CD4-positive, alpha-beta memory T cell (primary cell): ENCODE measurements at regions of chr2 and their contacts with region 1.

Region 1: GRCh38 chr2:74391580-74392448 is 11.7 kb upstream of the DCTN1 start:
- DNase-seq: peak; percentile 92 to 96 (median 94)
- H3K4me3 ChIP-seq: peak overlapping the region; percentile 84 to 90
- H3K4me3 Mint-ChIP-seq: peak overlapping the region in 5 of 8 donors; percentile 96 to 99 (median 97)
- H3K27ac ChIP-seq: peak overlapping the region; percentile 88
- H3K27ac Mint-ChIP-seq: peak overlapping the region in 6 of 7 donors; percentile 99 to 100 (median 100)
- H3K4me1 ChIP-seq: peaks cover 27% of the 10 kb centered on the region
- H3K4me1 Mint-ChIP-seq: peaks cover 5 to 13% (median 6%) of the 10 kb centered on the region in 4 donors
- H3K27me3 ChIP-seq: no peaks in the 10 kb centered on the region
- H3K27me3 Mint-ChIP-seq: peaks cover 0 to 5% of the 10 kb centered on the region in 2 donors

Region 2: DNA sequence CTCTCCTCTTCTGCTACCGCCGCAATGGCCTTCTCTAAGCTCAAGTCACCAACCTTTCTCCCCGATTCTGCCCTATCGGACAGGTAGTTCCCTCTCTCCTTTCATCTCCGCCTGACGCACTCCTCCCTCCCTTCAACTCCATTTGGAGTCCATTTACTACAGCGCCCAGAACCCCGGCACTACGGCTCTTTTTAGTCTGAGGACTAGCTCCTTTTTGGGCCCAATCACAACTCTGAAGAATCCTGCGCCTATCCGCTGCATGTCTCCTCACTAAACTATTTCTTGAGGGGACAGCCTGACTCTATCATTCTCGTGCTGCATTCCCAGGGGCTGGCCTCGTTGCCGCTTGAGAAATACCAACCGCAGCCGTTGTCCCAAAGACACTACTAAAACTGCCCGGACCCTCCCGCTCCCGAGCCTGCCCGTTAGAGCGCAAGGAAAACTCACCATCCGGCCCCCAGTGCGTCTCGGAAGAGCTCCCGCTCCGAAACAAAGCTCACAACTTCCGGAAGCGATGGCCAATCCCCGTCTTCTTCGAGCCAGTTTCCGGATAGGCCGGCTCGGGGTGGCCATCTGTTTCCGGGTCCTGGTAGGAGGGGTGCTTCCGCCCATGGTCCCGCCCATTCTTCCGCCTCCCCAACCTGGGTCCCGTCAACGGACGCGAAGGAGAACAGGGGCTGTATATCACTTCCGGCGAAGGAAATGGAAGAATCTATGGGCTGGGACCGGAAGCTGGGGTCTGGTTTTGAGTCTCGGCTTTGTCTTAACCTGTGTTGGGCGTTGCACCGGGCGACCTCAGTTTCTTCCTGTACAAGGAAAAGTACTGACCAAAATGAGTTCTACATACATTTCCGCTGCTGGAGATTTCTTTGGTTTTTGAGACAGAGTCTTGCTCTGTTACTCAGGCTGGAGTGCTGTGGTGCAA is 654.7 kb before region 1 on chr2 and contains the start of gene TPRKB:
- CTCF ChIA-PET with region 1: no interaction called
- POLR2A ChIA-PET with region 1: interaction called, 10 read pairs
- intact Hi-C with region 1: loop called (anchors 5 kb)
- DNase-seq: peak; percentile 93 to 95 (median 94)
- H3K4me3 ChIP-seq: peak within 1 kb of the TSS; percentile 43 to 74
- H3K4me3 Mint-ChIP-seq: peak within 1 kb of the TSS; percentile 90 to 98 (median 95)
- H3K27ac ChIP-seq: peak within 1 kb of the TSS; percentile 68
- H3K27ac Mint-ChIP-seq: peak within 1 kb of the TSS; percentile 85 to 96 (median 93)
- H3K4me1 ChIP-seq: peaks cover 24% of the 10 kb centered on the region
- H3K4me1 Mint-ChIP-seq: peaks cover 15 to 25% (median 19%) of the 10 kb centered on the region in 4 donors
- H3K27me3 ChIP-seq: no peaks in the 10 kb centered on the region
- H3K27me3 Mint-ChIP-seq: no peaks in the 10 kb centered on the region
- total RNA-seq, gene TPRKB: 31.7 to 33.0 TPM

Region 3: GRCh38 chr2:74178201-74179062 is 213.4 kb before region 1 on chr2 and contains the start of gene MOB1A:
- CTCF ChIA-PET with region 1: no interaction called
- POLR2A ChIA-PET with region 1: interaction called, 12 read pairs
- intact Hi-C with region 1: no loop called
- DNase-seq: peak; percentile 97 to 99 (median 98)
- H3K4me3 ChIP-seq: peak within 1 kb of the TSS; percentile 69 to 74
- H3K4me3 Mint-ChIP-seq: peak within 1 kb of the TSS; percentile 90 to 94 (median 94)
- H3K27ac ChIP-seq: peak within 1 kb of the TSS; percentile 99
- H3K27ac Mint-ChIP-seq: peak within 1 kb of the TSS; percentile 89 to 96 (median 95)
- H3K4me1 ChIP-seq: peaks cover 47% of the 10 kb centered on the region
- H3K4me1 Mint-ChIP-seq: peaks cover 22 to 48% (median 35%) of the 10 kb centered on the region in 4 donors
- H3K27me3 ChIP-seq: no peaks in the 10 kb centered on the region
- H3K27me3 Mint-ChIP-seq: no peaks in the 10 kb centered on the region
- total RNA-seq, gene MOB1A: 135 TPM

Region 4: DNA sequence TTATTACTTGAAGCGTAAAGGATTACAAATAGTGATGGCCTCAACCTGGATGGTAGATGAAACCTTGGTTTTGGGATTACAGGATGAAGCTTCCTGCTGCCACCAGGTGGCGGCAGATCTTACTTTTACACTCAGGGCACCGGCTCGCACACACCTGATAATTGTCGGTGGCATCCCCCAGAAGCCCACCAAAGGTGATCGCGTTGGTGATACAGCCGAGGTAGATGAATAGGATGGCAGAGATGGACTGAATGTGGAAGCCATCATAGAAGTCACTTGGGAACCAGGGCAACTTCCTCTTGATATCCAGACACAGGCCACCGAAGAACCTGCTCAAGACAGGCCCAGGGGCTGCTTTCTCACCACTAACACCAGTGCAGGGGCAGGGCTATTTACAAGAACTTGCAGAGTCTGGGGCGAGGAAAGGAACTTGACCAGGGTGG is 141.6 kb before region 1 on chr2:
- CTCF ChIA-PET with region 1: interaction called, 9 read pairs
- POLR2A ChIA-PET with region 1: no interaction called
- intact Hi-C with region 1: loop called (anchors 1 kb)
- DNase-seq: peak in 4 of 5 donors; percentile 53 to 59 (median 57)
- H3K4me3 ChIP-seq: no peak overlapping the region
- H3K4me3 Mint-ChIP-seq: peak overlapping the region in 1 of 8 donors; percentile 55
- H3K27ac ChIP-seq: no peak overlapping the region
- H3K27ac Mint-ChIP-seq: peak overlapping the region in 3 of 7 donors; percentile 55 to 84 (median 84)
- H3K4me1 ChIP-seq: peaks cover 4% of the 10 kb centered on the region
- H3K4me1 Mint-ChIP-seq: peaks cover 4 to 8% (median 6%) of the 10 kb centered on the region in 4 donors
- H3K27me3 ChIP-seq: no peaks in the 10 kb centered on the region
- H3K27me3 Mint-ChIP-seq: no peaks in the 10 kb centered on the region

Region 5: DNA sequence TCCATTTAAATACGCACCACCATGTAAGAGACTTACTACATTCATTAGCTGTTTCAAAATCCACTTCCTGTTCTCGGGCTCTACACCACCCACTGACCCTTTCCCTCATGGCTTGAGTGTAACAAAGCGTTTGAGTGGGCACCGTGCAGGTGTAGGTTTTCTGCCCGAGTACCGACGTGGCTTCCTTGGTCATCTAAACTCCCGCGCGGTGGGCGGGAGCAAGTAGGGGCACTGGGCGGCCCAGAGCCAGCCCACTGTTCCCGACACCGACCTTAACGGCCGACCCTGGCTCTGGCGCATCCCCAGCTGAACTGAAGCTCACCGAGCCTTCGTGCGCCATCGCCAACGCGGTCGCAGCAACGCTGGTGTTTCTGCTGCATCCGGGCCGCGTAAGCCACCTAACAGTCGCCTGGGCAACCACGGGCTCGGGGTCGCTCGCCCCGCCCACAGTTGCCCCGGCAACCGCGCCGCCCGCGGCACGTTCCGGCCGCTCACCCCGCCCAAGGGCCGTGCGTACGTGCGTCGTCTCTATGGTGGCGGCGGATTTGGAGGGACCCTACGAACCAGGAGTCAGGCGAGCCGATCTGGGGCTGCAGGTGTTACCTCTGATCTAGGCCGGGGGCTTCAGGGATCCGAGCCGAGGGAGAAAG is 29.5 kb after region 1 on chr2 and contains the starts of genes C2orf81 and WDR54:
- CTCF ChIA-PET with region 1: interaction called, 5 read pairs
- POLR2A ChIA-PET with region 1: interaction called, 34 read pairs
- intact Hi-C with region 1: loop called (anchors 1 kb)
- DNase-seq: peak; percentile 91 to 96 (median 95)
- H3K4me3 ChIP-seq: peak within 1 kb of the TSS; percentile 76 to 88
- H3K4me3 Mint-ChIP-seq: peak within 1 kb of the TSS; percentile 96 to 100 (median 98)
- H3K27ac ChIP-seq: peak within 1 kb of the TSS; percentile 93
- H3K27ac Mint-ChIP-seq: peak within 1 kb of the TSS; percentile 88 to 100 (median 99)
- H3K4me1 ChIP-seq: peaks cover 11% of the 10 kb centered on the region
- H3K4me1 Mint-ChIP-seq: peaks cover 12 to 30% (median 21%) of the 10 kb centered on the region in 4 donors
- H3K27me3 ChIP-seq: no peaks in the 10 kb centered on the region
- H3K27me3 Mint-ChIP-seq: no peaks in the 10 kb centered on the region
- total RNA-seq, gene C2orf81: 5.3 to 7.5 TPM
- total RNA-seq, gene WDR54: 36.3 to 41.0 TPM

Region 6: GRCh38 chr2:74587664-74588277 is 196.0 kb after region 1 on chr2:
- CTCF ChIA-PET with region 1: interaction called, 4 read pairs
- POLR2A ChIA-PET with region 1: no interaction called
- intact Hi-C with region 1: loop called (anchors 10 kb)
- DNase-seq: peak; percentile 58 to 68 (median 67)
- H3K4me3 ChIP-seq: no peak overlapping the region
- H3K4me3 Mint-ChIP-seq: no peak overlapping the region
- H3K27ac ChIP-seq: no peak overlapping the region
- H3K27ac Mint-ChIP-seq: no peak overlapping the region
- H3K4me1 ChIP-seq: peaks cover 8% of the 10 kb centered on the region
- H3K4me1 Mint-ChIP-seq: peaks cover 7 to 10% (median 9%) of the 10 kb centered on the region in 4 donors
- H3K27me3 ChIP-seq: peaks cover 13% of the 10 kb centered on the region
- H3K27me3 Mint-ChIP-seq: peaks cover 1 to 8% of the 10 kb centered on the region in 2 donors